Dorsolateral prefrontal cortex (tissue), 120 donors: ENCODE measurements at regions of chr3 and their contacts with region 1.

Region 1: DNA sequence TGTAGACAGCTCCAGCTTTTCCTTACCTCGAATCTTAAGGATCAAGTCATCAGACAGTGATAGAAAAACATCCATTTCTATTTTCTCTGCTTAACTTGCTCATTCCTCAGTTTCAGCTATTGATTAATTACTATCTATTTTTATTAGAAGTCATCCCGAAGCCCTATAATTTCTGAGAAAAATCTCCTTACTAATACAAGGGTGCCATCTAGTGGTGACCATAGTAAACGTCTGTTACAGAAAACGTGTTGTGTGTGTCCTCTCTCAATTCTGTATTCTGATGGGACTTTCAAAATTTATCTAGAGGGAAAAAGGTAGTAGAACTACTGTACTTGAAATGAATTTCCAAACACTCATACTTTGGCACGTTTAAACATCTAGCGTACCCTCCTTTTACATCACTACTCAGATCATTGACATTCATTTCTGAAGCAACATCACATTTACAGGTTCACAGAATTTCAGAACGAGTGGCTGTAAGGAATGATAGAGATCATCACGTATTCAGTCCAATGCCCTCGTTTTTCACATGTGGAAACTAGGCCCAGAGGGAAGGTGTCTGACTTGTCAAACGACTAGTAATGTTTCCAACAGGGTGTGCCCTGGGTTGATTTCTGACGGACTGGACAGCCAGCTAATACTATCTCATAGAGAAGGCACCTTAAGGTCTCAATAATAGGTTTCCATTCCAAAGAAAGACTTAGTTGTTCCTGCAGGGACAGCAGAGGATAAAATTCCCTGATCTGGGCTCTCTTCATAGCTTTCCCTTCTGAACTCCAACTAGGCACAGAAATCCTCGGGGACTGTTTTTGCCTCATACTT is 25.6 kb downstream of the HACD2 start:
- DNase-seq: no peak
- H3K4me3 ChIP-seq: no peak overlapping the region
- H3K27ac ChIP-seq: peak overlapping the region in 49 of 59 donors; percentile 10 to 88 (median 56)
- H3K27me3 ChIP-seq: no peaks in the 10 kb centered on the region
- CTCF ChIP-seq: peak; percentile 68 to 93 (median 86)

Region 2: DNA sequence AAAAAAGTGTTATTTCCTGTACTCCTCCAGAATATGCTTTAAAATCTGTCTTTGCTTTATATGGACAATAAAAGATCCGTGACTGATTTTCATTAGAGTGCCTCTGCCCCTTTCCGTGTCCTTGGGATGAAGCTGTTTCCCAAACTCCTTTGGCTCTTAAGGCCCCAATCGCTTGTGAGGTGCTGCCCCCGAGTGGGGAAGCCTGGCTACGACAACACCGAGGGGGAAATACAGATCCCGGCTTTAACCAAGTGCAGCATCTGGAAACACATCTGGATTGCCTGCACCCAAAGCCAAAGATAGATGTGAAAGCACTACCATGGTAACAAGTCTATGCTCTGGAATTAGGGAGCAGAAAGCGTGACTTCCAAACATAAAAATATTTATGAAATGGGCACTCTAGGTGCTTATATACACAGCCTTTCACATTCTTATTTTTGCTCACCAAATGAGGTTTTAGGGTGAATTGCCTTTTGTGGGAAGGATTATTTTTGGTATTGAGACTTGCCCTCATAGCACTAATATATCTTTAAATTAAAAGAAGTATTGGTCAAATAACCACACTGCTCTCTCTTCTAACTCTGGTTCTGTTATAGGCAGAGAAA is 69.7 kb before region 1 on chr3:
- intact Hi-C with region 1: loop called in 1 of 2 experiments (anchors 10 kb)
- DNase-seq: peak; percentile 52 to 83 (median 79)
- H3K4me3 ChIP-seq: peak overlapping the region in 1 of 59 donors; percentile 15
- H3K27ac ChIP-seq: peak overlapping the region in 17 of 59 donors; percentile 4 to 68 (median 33)
- H3K27me3 ChIP-seq: no peaks in the 10 kb centered on the region
- CTCF ChIP-seq: peak; percentile 75 to 98 (median 92)